IMR-90 (cell line): ENCODE measurements at regions of chr18 and their contacts with region 1.

Region 1: GRCh38 chr18:48445540-48445939 is 36.4 kb upstream of the ZBTB7C start:
- DNase-seq: peak; percentile 74
- ATAC-seq: peak; percentile 92
- H3K4me3 ChIP-seq: no peak overlapping the region
- H3K27ac ChIP-seq: no peak overlapping the region
- H3K4me1 ChIP-seq: no peaks in the 10 kb centered on the region
- H3K27me3 ChIP-seq: peaks cover 62% of the 10 kb centered on the region
- CTCF ChIP-seq: peak; percentile 88
- POLR2A ChIP-seq: no peak
- RAD21 ChIP-seq: peak; percentile 73

Region 2: DNA sequence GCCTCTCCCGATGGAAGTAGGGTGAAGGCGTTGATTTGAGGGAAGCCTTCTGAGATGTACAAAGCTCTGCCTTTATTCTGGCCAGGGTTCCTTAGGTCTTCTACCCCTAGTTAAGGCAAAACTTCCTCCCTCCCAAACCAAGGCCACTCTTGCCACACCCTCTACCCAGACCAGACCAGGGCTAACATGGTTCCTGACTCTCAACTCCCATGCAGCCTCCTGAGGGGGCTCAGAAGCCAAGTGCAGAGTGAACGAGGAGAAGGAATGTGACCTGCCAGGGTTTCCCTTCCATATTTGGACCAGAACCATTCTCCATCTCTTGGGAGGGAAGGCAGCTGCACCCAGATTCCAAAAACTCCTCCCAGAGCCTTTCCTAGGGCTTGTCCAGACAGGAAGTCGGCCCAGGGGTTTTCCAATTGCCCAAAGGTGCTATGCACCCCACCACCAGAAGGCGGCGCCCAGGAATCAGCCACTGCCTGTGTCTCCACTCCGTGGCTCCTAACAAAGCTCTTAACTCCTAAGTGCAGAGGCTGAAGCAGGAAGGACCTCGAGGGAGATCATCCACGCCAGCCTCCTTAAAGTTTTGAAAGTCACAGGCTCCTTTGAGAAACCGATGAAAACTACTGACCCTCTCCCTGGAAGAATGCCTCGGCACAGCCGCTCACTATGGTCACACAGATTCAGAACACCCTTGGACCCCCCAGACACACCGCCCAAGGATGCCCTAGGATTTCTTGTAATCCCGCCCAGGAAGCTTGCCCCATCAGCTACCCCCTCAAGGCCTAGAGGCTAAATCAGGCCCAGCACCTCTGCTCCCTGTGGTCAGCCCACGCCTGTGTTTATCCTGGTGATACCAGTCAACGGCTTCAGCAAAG is 672.9 kb before region 1 on chr18:
- CTCF ChIA-PET with region 1: interaction called, 3 read pairs
- POLR2A ChIA-PET with region 1: no interaction called
- dilution Hi-C with region 1: no loop called
- in situ Hi-C with region 1: loop called (anchors 10 kb)
- intact Hi-C with region 1: loop called (anchors 10 kb)
- DNase-seq: peak; percentile 42
- ATAC-seq: peak; percentile 95
- H3K4me3 ChIP-seq: no peak overlapping the region
- H3K27ac ChIP-seq: no peak overlapping the region
- H3K4me1 ChIP-seq: no peaks in the 10 kb centered on the region
- H3K27me3 ChIP-seq: no peaks in the 10 kb centered on the region
- CTCF ChIP-seq: peak; percentile 79
- POLR2A ChIP-seq: no peak
- RAD21 ChIP-seq: peak; percentile 86

Region 3: DNA sequence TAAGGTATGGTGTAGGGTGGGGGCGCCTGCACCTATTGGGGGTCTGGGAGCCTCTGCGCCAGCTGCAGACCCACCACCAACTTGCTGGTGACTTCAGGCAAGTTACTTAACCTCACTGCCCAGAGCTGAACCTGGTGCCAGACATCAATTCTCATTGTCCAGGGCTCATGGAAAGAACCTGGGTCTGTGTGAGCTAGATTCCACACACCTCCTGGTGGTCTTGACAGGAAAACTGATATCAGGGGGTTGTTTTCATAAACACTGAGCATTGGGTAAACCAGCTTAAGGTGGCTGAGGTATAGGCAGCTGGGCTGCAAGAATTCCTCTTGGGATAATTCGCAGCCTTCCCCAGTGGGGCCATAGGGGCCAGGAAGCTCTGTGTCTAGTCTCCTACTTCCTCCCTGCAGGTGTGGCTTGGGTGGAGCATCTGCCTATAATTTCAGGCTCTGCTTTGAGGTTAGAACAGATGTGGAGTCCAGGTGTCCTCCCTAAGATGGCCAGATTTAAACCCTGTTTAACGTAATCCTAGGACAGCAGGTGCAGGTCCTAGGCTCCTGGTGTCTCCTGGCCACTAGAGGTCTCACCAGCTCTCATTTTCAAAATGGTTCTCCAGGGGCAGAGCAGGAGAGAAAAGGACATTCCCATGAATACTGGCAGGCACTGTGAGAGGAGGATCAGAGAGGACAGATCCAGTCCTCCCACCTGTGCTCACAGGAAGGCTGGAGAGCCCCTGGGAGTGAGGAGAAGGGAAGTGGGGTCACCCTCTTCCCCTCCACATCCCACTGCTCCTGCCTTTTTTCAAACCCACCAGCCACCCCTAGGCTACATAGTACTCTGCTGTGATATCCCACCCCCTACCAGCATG is 414.7 kb before region 1 on chr18:
- CTCF ChIA-PET with region 1: interaction called, 4 read pairs
- POLR2A ChIA-PET with region 1: no interaction called
- dilution Hi-C with region 1: no loop called
- in situ Hi-C with region 1: loop called (anchors 5 kb)
- intact Hi-C with region 1: loop called (anchors 1 kb)
- DNase-seq: peak; percentile 34
- ATAC-seq: peak; percentile 83
- H3K4me3 ChIP-seq: no peak overlapping the region
- H3K27ac ChIP-seq: no peak overlapping the region
- H3K4me1 ChIP-seq: no peaks in the 10 kb centered on the region
- H3K27me3 ChIP-seq: peaks cover 8% of the 10 kb centered on the region
- CTCF ChIP-seq: peak; percentile 61
- POLR2A ChIP-seq: no peak
- RAD21 ChIP-seq: peak; percentile 56

Region 4: GRCh38 chr18:48428475-48429177 is 16.9 kb before region 1 on chr18:
- CTCF ChIA-PET with region 1: no interaction called
- POLR2A ChIA-PET with region 1: interaction called, 16 read pairs
- dilution Hi-C with region 1: no loop called
- in situ Hi-C with region 1: no loop called
- intact Hi-C with region 1: no loop called
- DNase-seq: no peak
- ATAC-seq: no peak
- H3K4me3 ChIP-seq: no peak overlapping the region
- H3K27ac ChIP-seq: no peak overlapping the region
- H3K4me1 ChIP-seq: no peaks in the 10 kb centered on the region
- H3K27me3 ChIP-seq: peaks cover 35% of the 10 kb centered on the region
- CTCF ChIP-seq: no peak
- POLR2A ChIP-seq: no peak
- RAD21 ChIP-seq: no peak

Region 5: DNA sequence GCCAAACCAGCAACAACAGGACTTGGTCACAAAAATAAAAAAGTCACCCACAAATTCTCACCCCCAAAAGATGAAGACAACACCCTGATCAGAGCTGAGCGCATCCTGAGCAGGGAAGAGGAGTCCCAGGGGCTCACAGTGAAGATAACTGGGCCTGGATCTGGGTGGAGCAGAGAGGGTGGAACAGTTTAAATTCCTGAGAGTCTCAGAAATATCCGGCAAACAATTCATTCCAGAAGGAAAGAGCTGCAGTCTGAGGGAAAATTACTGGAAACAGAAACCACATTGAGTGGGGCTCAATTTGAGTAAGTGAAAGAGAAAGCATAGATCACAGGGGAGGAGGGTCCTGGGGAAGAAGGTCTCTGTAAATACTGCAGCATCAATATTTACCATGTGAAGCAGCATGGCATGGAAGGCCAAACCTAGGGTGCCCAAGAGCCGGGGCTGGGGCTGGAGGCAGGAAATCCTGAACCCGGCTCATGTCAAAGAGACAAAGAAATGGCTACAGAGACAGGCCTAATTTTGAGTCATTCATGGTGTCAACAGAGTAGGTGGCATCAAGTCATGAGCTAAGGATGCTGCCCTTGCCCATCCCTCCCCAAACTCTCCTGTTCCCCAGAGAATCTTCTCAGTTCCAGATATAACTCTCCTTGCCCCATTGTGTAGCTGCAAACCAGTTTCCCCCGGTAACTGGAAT is 25.1 kb after region 1 on chr18:
- CTCF ChIA-PET with region 1: interaction called, 9 read pairs
- POLR2A ChIA-PET with region 1: no interaction called
- dilution Hi-C with region 1: no loop called
- in situ Hi-C with region 1: no loop called
- intact Hi-C with region 1: loop called (anchors 1 kb)
- DNase-seq: no peak
- ATAC-seq: peak; percentile 64
- H3K4me3 ChIP-seq: no peak overlapping the region
- H3K27ac ChIP-seq: no peak overlapping the region
- H3K4me1 ChIP-seq: no peaks in the 10 kb centered on the region
- H3K27me3 ChIP-seq: peaks cover 30% of the 10 kb centered on the region
- CTCF ChIP-seq: no peak
- POLR2A ChIP-seq: no peak
- RAD21 ChIP-seq: no peak